ENCODE measurements at regions of chr3 and their contacts with region 1.

Region 1: GRCh38 chr3:71305231-71306206 is 278.0 kb downstream of the FOXP1 start:
- DNase-seq: no peak
- ATAC-seq: peak; percentile 77
- H3K4me3 ChIP-seq: peak overlapping the region; percentile 59 to 93
- H3K27ac ChIP-seq: peak overlapping the region; percentile 23 to 88
- H3K4me1 ChIP-seq: peaks cover 0 to 8% of the 10 kb centered on the region in 2 donors
- H3K27me3 ChIP-seq: no peaks in the 10 kb centered on the region

Region 2: GRCh38 chr3:70550723-70551319 is 754.7 kb before region 1 on chr3:
- intact Hi-C with region 1: loop called (anchors 10 kb)
- DNase-seq: peak; percentile 79 to 88
- ATAC-seq: peak; percentile 76
- H3K4me3 ChIP-seq: no peak overlapping the region
- H3K27ac ChIP-seq: no peak overlapping the region
- H3K4me1 ChIP-seq: no peaks in the 10 kb centered on the region
- H3K27me3 ChIP-seq: no peaks in the 10 kb centered on the region

Region 3: DNA sequence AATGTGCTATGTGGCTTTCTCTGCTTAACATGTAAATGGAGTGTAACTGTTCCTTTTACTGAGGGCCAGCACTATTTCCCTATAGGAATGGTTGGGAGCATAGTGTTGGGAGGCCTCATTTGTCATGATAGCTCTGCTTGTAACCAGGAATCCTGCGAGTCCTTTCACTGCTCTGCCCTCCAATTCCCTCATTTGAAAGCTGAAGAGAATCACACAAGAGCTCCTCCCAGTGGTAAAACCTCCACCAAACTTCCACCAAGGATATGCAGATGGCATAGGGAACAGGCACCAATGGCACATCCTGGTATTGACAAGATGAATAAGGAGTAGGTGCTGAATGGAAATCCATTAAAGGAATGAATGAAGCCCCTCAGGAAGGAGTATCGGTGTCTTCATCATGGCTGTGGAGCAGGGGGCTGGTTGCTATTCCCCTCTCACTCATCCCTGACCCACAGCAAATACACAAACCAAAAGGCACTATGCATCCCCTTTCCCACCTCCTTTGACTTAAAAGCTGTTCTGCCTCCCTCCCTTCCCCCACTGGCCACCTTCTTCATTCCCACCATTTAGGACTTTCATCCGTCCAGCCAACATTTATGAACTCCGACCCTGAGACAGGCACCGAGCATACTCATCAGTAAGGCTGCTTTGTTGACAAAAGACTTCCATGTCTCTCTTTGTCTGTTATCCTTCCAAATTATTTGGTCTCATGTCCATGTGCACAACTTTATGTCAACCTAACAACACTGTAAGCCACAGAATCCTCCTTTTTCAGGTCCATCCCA is 282.8 kb before region 1 on chr3:
- intact Hi-C with region 1: loop called in 1 of 2 experiments (anchors 10 kb)
- DNase-seq: no peak
- ATAC-seq: peak; percentile 15
- H3K4me3 ChIP-seq: no peak overlapping the region
- H3K27ac ChIP-seq: no peak overlapping the region
- H3K4me1 ChIP-seq: peaks cover 9 to 28% of the 10 kb centered on the region in 2 donors
- H3K27me3 ChIP-seq: no peaks in the 10 kb centered on the region

Region 4: GRCh38 chr3:71064288-71064955 is 241.1 kb before region 1 on chr3:
- intact Hi-C with region 1: loop called in 1 of 2 experiments (anchors 10 kb)
- DNase-seq: peak; percentile 71 to 78
- ATAC-seq: peak; percentile 68
- H3K4me3 ChIP-seq: peak overlapping the region; percentile 76 to 88
- H3K27ac ChIP-seq: peak overlapping the region; percentile 62 to 99
- H3K4me1 ChIP-seq: peaks cover 3 to 5% of the 10 kb centered on the region in 2 donors
- H3K27me3 ChIP-seq: no peaks in the 10 kb centered on the region

Region 5: DNA sequence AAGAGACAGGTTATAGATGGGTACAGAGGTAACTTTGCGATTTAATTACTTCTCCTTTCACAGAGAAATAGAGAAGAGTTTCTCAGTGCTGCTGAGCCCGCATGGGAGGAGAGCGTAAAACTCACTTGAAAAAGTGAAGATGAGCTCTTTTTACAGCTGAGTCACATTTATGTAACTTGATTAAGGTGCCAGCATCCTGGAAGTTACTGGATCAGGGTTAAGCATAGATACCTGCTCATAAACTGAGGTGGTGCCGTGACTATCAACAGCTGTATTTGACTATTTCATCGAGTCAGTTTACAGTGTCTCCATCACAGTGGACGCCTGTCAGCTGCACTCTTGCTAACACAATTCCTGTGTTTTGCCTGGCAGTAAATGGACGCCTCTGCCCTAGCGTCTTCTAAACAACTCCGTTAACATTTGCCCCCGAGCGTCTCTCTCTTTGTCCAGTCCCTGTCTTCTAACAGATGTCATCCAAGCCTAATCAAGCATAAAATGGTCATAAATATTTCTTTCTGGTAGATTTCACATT is 136.6 kb before region 1 on chr3:
- intact Hi-C with region 1: loop called in 1 of 2 experiments (anchors 10 kb)
- DNase-seq: no peak
- ATAC-seq: no peak
- H3K4me3 ChIP-seq: peak overlapping the region in 1 of 2 donors; percentile 41
- H3K27ac ChIP-seq: peak overlapping the region; percentile 95 to 99
- H3K4me1 ChIP-seq: peaks cover 4 to 27% of the 10 kb centered on the region in 2 donors
- H3K27me3 ChIP-seq: no peaks in the 10 kb centered on the region

Region 6: GRCh38 chr3:71258116-71258515 is 47.4 kb before region 1 on chr3:
- intact Hi-C with region 1: loop called in 1 of 2 experiments (anchors 5 kb)
- DNase-seq: no peak
- ATAC-seq: no peak
- H3K4me3 ChIP-seq: no peak overlapping the region
- H3K27ac ChIP-seq: no peak overlapping the region
- H3K4me1 ChIP-seq: peaks cover 3 to 6% of the 10 kb centered on the region in 2 donors
- H3K27me3 ChIP-seq: no peaks in the 10 kb centered on the region

Measured in aorta (tissue), 5 donors.